ENCODE measurements at regions of chr4 and their contacts with region 1.

Region 1: GRCh38 chr4:82823062-82823461 is 24.5 kb upstream of the SCD5 start:
- DNase-seq: no peak
- ATAC-seq: no peak
- H3K4me3 ChIP-seq: no peak overlapping the region
- H3K27ac ChIP-seq: no peak overlapping the region
- H3K4me1 ChIP-seq: no peaks in the 10 kb centered on the region
- H3K27me3 ChIP-seq: no peaks in the 10 kb centered on the region
- CTCF ChIP-seq: no peak
- POLR2A ChIP-seq: no peak

Region 2: DNA sequence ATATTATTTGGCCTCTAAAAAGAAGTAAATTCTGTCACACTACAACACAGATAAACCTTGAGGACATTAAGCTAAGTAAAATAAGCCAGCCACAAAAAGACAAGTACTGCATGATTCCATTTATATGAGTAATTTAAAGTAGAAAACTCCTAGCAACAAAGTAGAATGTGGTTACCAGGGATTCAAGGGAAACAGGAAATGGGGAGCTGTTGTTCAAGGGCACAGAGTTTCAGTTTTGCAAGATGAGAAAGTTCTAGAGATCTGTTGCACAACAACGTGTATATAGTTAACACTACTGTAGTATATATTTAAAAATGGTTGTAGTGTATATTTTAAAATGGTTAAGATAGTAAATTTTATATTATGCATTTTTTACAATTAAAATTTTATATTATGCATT is 42.5 kb after region 1 on chr4:
- intact Hi-C with region 1: loop called (anchors 10 kb)
- DNase-seq: peak in 1 of 4 donors; percentile 51
- ATAC-seq: peak; percentile 74
- H3K4me3 ChIP-seq: no peak overlapping the region
- H3K27ac ChIP-seq: peak overlapping the region in 3 of 4 donors; percentile 47 to 81 (median 72)
- H3K4me1 ChIP-seq: peaks cover 33% of the 10 kb centered on the region
- H3K27me3 ChIP-seq: no peaks in the 10 kb centered on the region
- CTCF ChIP-seq: no peak
- POLR2A ChIP-seq: no peak